ENCODE measurements at regions of chrX and their contacts with region 1.

Region 1: DNA sequence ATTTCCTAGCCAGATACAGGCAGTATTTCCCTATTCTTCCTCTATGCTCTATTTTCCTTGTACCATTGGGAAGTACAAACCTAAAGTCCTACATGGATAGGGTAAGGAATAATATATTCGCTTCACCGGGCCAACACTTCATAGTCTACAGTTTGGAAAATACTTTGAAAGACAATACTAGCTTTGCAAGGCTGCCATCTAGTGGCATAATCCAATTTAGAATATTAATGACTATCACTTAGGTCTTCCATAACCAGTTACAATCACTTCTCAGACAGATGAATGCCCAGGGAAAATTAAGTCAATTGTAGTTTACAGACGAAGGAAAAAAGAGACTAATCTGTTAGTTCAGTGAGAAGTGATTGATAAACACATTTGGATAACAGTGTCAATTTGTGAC is 141.0 kb upstream of the FAM47C start:
- DNase-seq: peak in 1 of 9 donors; percentile 3
- ATAC-seq: no peak
- H3K4me3 ChIP-seq: no peak overlapping the region
- H3K4me3 Mint-ChIP-seq: no peak overlapping the region
- H3K27ac ChIP-seq: no peak overlapping the region
- H3K27ac Mint-ChIP-seq: no peak overlapping the region
- H3K4me1 ChIP-seq: no peaks in the 10 kb centered on the region
- H3K4me1 Mint-ChIP-seq: no peaks in the 10 kb centered on the region
- H3K27me3 ChIP-seq: no peaks in the 10 kb centered on the region
- H3K27me3 Mint-ChIP-seq: peaks cover 0 to 6% (median 0%) of the 10 kb centered on the region in 5 donors

Region 2: DNA sequence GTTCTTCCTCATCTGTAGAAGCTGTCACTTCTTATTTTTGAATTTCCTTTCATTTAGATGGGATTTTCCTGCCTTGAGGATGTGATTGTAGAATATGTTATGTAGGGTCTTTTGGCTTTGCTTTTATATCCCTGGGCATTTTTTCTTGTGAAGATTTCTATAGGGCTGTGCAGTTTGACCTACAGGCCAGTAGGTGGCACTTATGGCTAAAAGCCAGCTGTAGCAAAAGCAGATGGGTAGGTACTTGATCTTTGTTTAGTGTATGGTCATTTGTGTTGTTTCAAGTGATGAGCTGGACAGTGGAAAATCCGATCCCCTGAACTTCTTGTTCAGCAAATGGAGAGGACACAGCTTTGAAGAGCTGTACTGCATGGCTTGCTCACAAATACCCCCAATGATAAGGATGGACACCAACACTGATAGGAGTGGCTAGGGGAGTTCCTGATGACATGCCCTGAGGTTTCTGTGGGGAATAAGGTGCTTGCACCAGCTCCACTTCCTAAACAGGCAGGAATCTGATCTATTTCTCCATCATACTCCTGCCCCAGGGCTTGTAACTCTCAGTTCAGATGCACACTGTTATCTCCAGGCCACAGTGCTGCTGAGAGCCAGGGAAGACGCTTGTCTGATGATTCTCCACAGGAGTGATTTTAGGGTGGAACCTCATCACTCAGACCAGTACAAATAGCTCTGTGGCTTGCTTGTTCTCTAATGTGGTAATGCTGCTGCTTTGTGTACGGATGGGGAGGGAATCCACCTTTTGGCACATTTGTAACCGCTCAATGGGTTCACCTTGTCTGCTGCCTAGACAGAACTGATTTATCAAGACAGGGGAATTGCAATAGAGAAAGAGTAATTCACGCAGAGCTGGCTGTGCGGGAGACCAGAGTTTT is 1486.1 kb before region 1 on chrX:
- CTCF ChIA-PET with region 1: no interaction called
- POLR2A ChIA-PET with region 1: no interaction called
- intact Hi-C with region 1: loop called in 1 of 2 experiments (anchors 5 kb)
- DNase-seq: no peak
- ATAC-seq: no peak
- H3K4me3 ChIP-seq: no peak overlapping the region
- H3K4me3 Mint-ChIP-seq: no peak overlapping the region
- H3K27ac ChIP-seq: no peak overlapping the region
- H3K27ac Mint-ChIP-seq: no peak overlapping the region
- H3K4me1 ChIP-seq: no peaks in the 10 kb centered on the region
- H3K4me1 Mint-ChIP-seq: no peaks in the 10 kb centered on the region
- H3K27me3 ChIP-seq: no peaks in the 10 kb centered on the region
- H3K27me3 Mint-ChIP-seq: no peaks in the 10 kb centered on the region

Region 3: GRCh38 chrX:35890699-35891098 is 976.4 kb before region 1 on chrX:
- CTCF ChIA-PET with region 1: no interaction called
- POLR2A ChIA-PET with region 1: no interaction called
- intact Hi-C with region 1: loop called in 1 of 2 experiments (anchors 5 kb)
- DNase-seq: peak in 4 of 9 donors; percentile 0 to 12 (median 4)
- ATAC-seq: no peak
- H3K4me3 ChIP-seq: no peak overlapping the region
- H3K4me3 Mint-ChIP-seq: no peak overlapping the region
- H3K27ac ChIP-seq: no peak overlapping the region
- H3K27ac Mint-ChIP-seq: no peak overlapping the region
- H3K4me1 ChIP-seq: no peaks in the 10 kb centered on the region
- H3K4me1 Mint-ChIP-seq: no peaks in the 10 kb centered on the region
- H3K27me3 ChIP-seq: no peaks in the 10 kb centered on the region
- H3K27me3 Mint-ChIP-seq: no peaks in the 10 kb centered on the region

Measured in naive thymus-derived CD4-positive, alpha-beta T cell (primary cell).